Aorta (tissue), 5 donors: ENCODE measurements at regions of chr2 and their contacts with region 1.

Region 1: GRCh38 chr2:26033818-26034636 is at the start of gene RAB10:
- DNase-seq: peak; percentile 100
- ATAC-seq: peak; percentile 99
- H3K4me3 ChIP-seq: peak within 1 kb of the TSS; percentile 60 to 73
- H3K27ac ChIP-seq: peak within 1 kb of the TSS; percentile 67 to 85
- H3K4me1 ChIP-seq: no peaks in the 10 kb centered on the region
- H3K27me3 ChIP-seq: no peaks in the 10 kb centered on the region
- total RNA-seq, gene RAB10: 90.5 to 92.4 TPM

Region 2: DNA sequence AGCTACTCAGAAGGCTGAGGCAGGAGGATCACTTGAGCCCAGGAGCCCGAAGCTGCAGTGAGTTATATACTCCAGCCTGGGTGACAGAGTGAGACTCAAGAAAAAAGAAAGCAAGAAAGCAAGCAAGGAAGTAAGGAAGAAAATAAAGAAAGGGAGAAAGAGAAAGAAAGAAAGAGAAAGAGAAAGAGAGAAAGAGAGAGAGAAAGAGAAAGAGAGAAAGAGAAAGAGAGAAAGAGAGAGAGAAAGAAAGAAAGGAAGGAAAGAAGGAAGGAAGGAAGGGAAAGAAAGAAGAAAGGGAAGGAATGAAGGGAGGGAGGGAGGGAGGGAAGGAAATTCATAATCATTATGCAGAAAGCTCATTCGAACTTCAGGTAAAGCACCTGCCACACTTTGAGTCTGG is 85.6 kb before region 1 on chr2:
- intact Hi-C with region 1: no loop called
- DNase-seq: no peak
- ATAC-seq: no peak
- H3K4me3 ChIP-seq: no peak overlapping the region
- H3K27ac ChIP-seq: no peak overlapping the region
- H3K4me1 ChIP-seq: no peaks in the 10 kb centered on the region
- H3K27me3 ChIP-seq: no peaks in the 10 kb centered on the region

Region 3: DNA sequence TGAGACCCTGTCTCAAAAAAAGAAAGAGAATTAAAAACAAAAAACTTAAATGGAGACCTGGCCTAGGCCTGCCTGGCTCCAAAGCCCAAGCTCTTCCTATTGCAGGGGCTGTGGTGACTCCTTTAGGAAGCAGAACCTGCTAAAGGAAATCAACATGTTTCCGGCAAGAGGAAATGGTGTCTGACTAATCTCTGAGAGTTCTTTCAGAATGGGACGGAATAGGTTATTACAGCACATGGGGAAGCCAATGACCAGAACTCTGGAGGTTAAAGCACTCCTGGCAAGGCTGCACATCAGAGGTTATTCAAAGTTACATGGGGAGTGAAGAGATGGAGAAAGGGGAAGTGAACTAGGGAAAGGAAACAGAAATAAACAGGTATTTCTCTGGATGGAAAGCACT is 73.1 kb before region 1 on chr2:
- intact Hi-C with region 1: no loop called
- DNase-seq: peak in 1 of 2 donors; percentile 25
- ATAC-seq: no peak
- H3K4me3 ChIP-seq: no peak overlapping the region
- H3K27ac ChIP-seq: no peak overlapping the region
- H3K4me1 ChIP-seq: no peaks in the 10 kb centered on the region
- H3K27me3 ChIP-seq: no peaks in the 10 kb centered on the region

Region 4: GRCh38 chr2:25991965-25992364 is 42.1 kb before region 1 on chr2:
- intact Hi-C with region 1: loop called (anchors 5 kb)
- DNase-seq: no peak
- ATAC-seq: no peak
- H3K4me3 ChIP-seq: no peak overlapping the region
- H3K27ac ChIP-seq: no peak overlapping the region
- H3K4me1 ChIP-seq: no peaks in the 10 kb centered on the region
- H3K27me3 ChIP-seq: no peaks in the 10 kb centered on the region

Region 5: DNA sequence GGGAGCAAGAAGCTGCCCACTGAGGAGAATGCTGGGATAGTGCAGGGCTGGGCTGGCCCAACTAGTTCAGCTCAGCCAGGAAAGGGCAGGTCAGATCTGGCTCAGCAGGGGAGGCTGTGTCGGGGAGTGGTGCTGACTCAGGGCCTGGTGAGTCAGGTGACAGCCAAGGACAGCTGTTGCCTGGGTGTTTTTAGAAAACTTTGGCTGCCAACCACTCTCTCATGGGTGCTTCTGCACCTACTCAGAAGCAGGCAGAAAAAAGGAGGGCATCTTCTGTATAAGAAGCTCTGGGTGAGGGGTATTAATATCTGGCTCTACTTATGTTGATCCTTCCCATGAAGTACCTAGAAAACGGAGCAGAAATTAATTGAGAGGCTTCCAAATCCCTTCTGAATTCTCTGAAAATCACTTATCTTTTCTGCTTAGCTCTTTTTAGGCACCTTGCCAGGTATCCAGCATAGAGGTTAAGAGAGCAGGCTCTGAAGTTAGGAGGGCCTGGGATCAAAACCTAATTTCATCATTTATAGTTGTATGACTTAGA is 15.8 kb before region 1 on chr2:
- intact Hi-C with region 1: loop called in 1 of 2 experiments (anchors 2 kb)
- DNase-seq: peak; percentile 90 to 92
- ATAC-seq: peak; percentile 91
- H3K4me3 ChIP-seq: no peak overlapping the region
- H3K27ac ChIP-seq: peak overlapping the region; percentile 2 to 16
- H3K4me1 ChIP-seq: no peaks in the 10 kb centered on the region
- H3K27me3 ChIP-seq: no peaks in the 10 kb centered on the region

Region 6: DNA sequence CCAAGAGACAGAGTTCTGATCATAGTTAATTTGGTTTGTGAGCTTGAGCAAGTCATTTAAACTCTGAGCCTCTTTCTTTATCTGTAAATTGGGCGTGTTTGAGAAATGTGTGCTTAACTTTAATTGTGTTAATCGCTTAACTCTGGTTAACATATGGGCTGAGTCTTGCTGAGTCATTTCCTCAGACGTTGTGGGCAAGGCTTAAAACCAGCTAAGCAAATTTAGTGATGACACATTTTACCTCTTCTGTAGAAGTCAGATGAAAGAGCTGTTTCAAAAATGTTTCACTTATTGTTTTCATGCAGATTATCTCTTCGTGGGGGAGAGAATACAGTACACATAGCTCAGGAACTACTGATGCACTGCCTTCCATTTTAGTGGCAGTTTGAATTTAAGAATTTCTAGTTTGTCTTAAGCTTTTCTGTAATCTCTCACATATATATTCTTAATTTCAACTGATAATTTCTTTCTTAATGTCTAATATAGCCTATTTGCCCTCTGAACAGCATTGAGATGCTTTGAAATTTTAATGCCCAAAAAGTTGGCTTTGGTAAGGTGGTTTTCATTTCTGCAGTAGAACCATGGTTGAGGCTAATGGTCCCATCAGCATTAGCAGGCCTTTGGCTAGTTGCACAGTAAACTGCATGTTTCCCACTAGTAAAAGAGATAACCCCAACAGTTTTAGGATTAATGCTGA is 34.7 kb after region 1 on chr2:
- intact Hi-C with region 1: no loop called
- DNase-seq: no peak
- ATAC-seq: no peak
- H3K4me3 ChIP-seq: no peak overlapping the region
- H3K27ac ChIP-seq: no peak overlapping the region
- H3K4me1 ChIP-seq: peaks cover 1 to 10% of the 10 kb centered on the region in 2 donors
- H3K27me3 ChIP-seq: no peaks in the 10 kb centered on the region